Endothelial cell of umbilical vein (primary cell): ENCODE measurements at regions of chr14 and their contacts with region 1.

Region 1: DNA sequence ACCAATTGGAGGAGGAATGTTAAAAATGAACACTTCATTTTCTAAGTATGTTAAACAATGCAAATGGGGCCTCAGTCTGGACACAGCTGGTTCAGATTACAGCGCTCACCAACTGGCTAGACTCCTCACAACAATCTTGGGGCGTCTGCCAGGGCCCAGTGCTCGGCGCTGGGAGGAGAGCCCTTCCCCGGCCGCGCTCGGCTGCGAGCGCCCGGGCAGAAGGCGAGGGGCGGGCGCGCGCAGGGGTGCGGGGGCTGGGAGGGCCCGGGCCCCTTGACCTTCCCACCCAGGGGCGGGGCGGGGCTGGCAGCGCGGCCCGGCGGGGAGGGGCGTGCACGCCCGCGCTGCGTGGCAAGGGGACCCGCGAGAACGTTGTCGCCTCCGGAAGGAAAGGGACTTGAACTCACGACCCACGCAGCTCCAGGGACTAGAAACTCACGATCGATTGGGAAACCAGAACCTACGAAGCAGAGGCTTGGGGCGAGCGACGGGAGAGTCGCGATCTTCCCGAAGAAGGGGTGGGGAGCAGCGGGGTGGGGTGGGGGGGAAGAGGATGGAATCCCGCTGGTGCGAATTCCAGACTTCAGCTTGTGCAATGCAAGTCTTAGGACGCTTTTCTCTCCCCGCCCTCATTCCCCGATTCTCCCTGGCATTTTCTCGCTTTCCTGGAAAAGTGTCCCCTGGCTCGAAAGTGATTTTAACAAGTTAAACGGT is at the start of gene FBLN5:
- DNase-seq: peak; percentile 24
- H3K4me3 ChIP-seq: peak within 1 kb of the TSS; percentile 2 to 55 (median 48)
- H3K27ac ChIP-seq: no peak within 1 kb of the TSS
- H3K4me1 ChIP-seq: peaks cover 4% of the 10 kb centered on the region
- H3K27me3 ChIP-seq: peaks cover 0 to 17% of the 10 kb centered on the region in 2 experiments
- CTCF ChIP-seq: no peak
- POLR2A ChIP-seq: peak; percentile 18
- total RNA-seq, gene FBLN5: 27.6 and 44.9 TPM in 2 replicates

Region 2: GRCh38 chr14:91727121-91727520 is 220.5 kb before region 1 on chr14:
- CTCF ChIA-PET with region 1: no interaction called
- POLR2A ChIA-PET with region 1: no interaction called
- dilution Hi-C with region 1: no loop called
- intact Hi-C with region 1: no loop called
- DNase-seq: no peak
- H3K4me3 ChIP-seq: no peak overlapping the region
- H3K27ac ChIP-seq: no peak overlapping the region
- H3K4me1 ChIP-seq: no peaks in the 10 kb centered on the region
- H3K27me3 ChIP-seq: peaks cover 0 to 3% of the 10 kb centered on the region in 2 experiments
- CTCF ChIP-seq: no peak
- POLR2A ChIP-seq: no peak

Region 3: GRCh38 chr14:91980127-91980741 is 32.6 kb after region 1 on chr14:
- CTCF ChIA-PET with region 1: interaction called, 6 read pairs
- POLR2A ChIA-PET with region 1: no interaction called
- dilution Hi-C with region 1: no loop called
- intact Hi-C with region 1: loop called (anchors 2 kb)
- DNase-seq: peak; percentile 94
- H3K4me3 ChIP-seq: no peak overlapping the region
- H3K27ac ChIP-seq: peak overlapping the region; percentile 71
- H3K4me1 ChIP-seq: peaks cover 34% of the 10 kb centered on the region
- H3K27me3 ChIP-seq: no peaks in the 10 kb centered on the region
- CTCF ChIP-seq: no peak
- POLR2A ChIP-seq: no peak

Region 4: DNA sequence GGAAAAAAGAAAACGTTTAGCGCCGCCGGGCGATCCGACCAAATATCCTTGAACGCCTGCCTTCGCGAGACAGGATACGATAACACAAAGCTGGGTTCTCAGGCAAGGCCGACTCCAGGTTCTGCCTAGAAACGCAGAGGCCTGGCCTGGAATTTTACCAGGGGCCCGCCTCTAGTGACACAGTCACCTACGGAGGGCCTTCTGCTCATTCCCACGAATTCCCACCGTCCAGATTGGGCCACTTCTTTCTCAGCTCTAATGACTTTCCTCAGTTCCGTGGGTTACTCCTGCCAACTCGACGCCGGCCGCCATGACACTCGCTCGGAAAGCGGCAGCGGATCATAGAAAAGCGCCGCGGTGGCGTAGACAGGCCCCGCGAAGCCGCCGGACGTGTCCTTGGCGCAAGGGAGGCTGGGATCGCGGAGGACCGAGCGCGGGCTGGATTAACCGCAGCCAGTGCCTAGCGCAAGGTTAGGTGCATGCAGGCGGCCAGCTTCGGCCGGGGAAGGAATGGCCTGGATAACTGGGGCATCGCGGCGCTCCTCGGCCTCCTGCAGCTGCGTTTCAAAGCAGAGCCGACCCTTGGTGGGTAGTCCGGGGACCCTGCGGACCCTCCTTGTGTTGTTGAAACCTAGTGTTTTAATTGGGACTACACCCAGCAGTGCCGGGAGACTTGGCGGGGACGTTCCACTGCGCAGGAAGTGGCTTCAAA is 92.2 kb after region 1 on chr14 and contains the start of gene TRIP11:
- CTCF ChIA-PET with region 1: no interaction called
- POLR2A ChIA-PET with region 1: no interaction called
- dilution Hi-C with region 1: no loop called
- intact Hi-C with region 1: loop called (anchors 5 kb)
- DNase-seq: peak; percentile 94
- H3K4me3 ChIP-seq: peak within 1 kb of the TSS; percentile 67 to 96 (median 73)
- H3K27ac ChIP-seq: peak within 1 kb of the TSS; percentile 92
- H3K4me1 ChIP-seq: peaks cover 16% of the 10 kb centered on the region
- H3K27me3 ChIP-seq: no peaks in the 10 kb centered on the region
- CTCF ChIP-seq: no peak
- POLR2A ChIP-seq: peak; percentile 91
- total RNA-seq, gene TRIP11: 51.7 and 58.0 TPM in 2 replicates

Region 5: GRCh38 chr14:92121670-92122350 is 174.2 kb after region 1 on chr14 and contains the starts of genes CPSF2 and NDUFB1:
- CTCF ChIA-PET with region 1: no interaction called
- POLR2A ChIA-PET with region 1: no interaction called
- dilution Hi-C with region 1: no loop called
- intact Hi-C with region 1: loop called (anchors 5 kb)
- DNase-seq: peak; percentile 84
- H3K4me3 ChIP-seq: peak within 1 kb of the TSS; percentile 40 to 89 (median 79)
- H3K27ac ChIP-seq: peak within 1 kb of the TSS; percentile 75
- H3K4me1 ChIP-seq: peaks cover 7% of the 10 kb centered on the region
- H3K27me3 ChIP-seq: no peaks in the 10 kb centered on the region
- CTCF ChIP-seq: no peak
- POLR2A ChIP-seq: peak; percentile 95
- total RNA-seq, gene CPSF2: 76.9 and 81.7 TPM in 2 replicates
- total RNA-seq, gene NDUFB1: 95.2 and 114 TPM in 2 replicates